Colonic mucosa (tissue), 4 donors: ENCODE measurements at regions of chr21 and their contacts with region 1.

Region 1: GRCh38 chr21:41170442-41170841 is 2.5 kb downstream of the BACE2 start:
- DNase-seq: peak; percentile 61
- H3K4me3 ChIP-seq: no peak overlapping the region
- H3K27ac ChIP-seq: no peak overlapping the region
- H3K4me1 ChIP-seq: no peaks in the 10 kb centered on the region
- H3K27me3 ChIP-seq: no peaks in the 10 kb centered on the region
- CTCF ChIP-seq: peak; percentile 62

Region 2: GRCh38 chr21:40489001-40489400 is 681.4 kb before region 1 on chr21:
- intact Hi-C with region 1: no loop called
- DNase-seq: no peak
- H3K4me3 ChIP-seq: no peak overlapping the region
- H3K27ac ChIP-seq: no peak overlapping the region
- H3K4me1 ChIP-seq: no peaks in the 10 kb centered on the region
- H3K27me3 ChIP-seq: no peaks in the 10 kb centered on the region
- CTCF ChIP-seq: no peak

Region 3: GRCh38 chr21:41235201-41235985 is 65.0 kb after region 1 on chr21:
- intact Hi-C with region 1: loop called (anchors 10 kb)
- DNase-seq: no peak
- H3K4me3 ChIP-seq: no peak overlapping the region
- H3K27ac ChIP-seq: peak overlapping the region; percentile 5
- H3K4me1 ChIP-seq: no peaks in the 10 kb centered on the region
- H3K27me3 ChIP-seq: no peaks in the 10 kb centered on the region
- CTCF ChIP-seq: no peak

Region 4: DNA sequence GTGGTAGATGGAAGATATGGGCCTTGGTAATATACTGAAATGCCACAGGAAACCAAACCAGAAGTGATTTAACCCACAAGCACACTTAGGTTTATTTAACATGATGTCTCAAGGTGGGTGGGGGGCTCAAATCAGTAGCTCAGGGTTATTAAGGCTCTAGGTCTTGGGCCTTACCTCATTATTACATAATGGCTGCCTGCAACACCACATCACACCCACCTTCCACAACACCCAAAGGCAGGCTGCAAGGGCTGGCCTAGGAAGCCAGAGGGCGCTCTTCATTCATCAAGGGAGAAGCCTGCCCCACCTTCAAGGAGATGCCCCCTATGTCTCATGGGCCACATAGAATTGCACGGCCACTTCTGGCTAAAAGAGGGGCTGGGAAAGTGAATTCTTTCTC is 1189.9 kb after region 1 on chr21:
- intact Hi-C with region 1: no loop called
- DNase-seq: no peak
- H3K4me3 ChIP-seq: no peak overlapping the region
- H3K27ac ChIP-seq: no peak overlapping the region
- H3K4me1 ChIP-seq: no peaks in the 10 kb centered on the region
- H3K27me3 ChIP-seq: no peaks in the 10 kb centered on the region
- CTCF ChIP-seq: no peak